IMR-90 (cell line): ENCODE measurements at regions of chr20 and their contacts with region 1.

Region 1: GRCh38 chr20:37534401-37535157 is 6.9 kb upstream of the BLCAP start:
- DNase-seq: peak; percentile 77
- ATAC-seq: peak; percentile 98
- H3K4me3 ChIP-seq: no peak overlapping the region
- H3K27ac ChIP-seq: no peak overlapping the region
- H3K4me1 ChIP-seq: no peaks in the 10 kb centered on the region
- H3K27me3 ChIP-seq: peaks cover 14% of the 10 kb centered on the region
- CTCF ChIP-seq: peak; percentile 93
- POLR2A ChIP-seq: peak; percentile 49; the same call in 1 of the 2 replicates
- RAD21 ChIP-seq: peak; percentile 99

Region 2: DNA sequence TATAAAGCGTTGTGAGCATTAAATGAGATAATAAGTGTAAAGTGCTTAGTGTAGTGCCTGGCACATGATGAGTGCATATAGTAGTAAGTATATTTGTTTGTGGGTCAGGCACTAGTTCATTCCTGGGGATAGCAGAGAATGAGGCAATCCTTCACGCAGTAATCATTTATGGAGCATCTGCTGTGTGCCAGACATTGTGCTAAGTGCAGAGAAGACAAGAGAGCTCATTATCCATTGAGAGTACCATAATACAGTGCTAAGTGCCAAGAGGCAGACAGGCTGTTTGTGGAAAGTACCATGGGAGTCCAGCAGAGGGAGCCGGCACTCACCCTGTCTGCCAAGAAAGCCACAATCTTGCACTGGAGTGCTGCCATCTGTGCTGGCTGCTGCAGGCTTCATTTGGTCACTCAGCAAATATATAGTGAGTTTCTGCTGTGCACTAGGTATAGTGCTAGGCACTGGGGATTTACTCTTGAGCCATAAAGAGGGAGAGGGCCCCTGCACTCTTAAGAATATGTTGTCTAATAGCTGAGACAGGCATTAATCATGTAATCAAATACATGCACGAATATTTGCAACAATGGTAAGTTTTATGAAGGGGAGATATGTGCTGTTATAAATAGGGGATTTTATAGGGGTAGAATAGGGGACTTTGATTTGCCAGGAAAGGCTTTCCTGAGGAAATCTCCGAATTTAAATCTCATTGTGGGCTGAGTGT is 342.3 kb before region 1 on chr20:
- CTCF ChIA-PET with region 1: interaction called, 3 read pairs
- POLR2A ChIA-PET with region 1: no interaction called
- dilution Hi-C with region 1: no loop called
- in situ Hi-C with region 1: loop called (anchors 5 kb)
- intact Hi-C with region 1: loop called (anchors 1 kb)
- DNase-seq: peak; percentile 89
- ATAC-seq: peak; percentile 88
- H3K4me3 ChIP-seq: no peak overlapping the region
- H3K27ac ChIP-seq: no peak overlapping the region
- H3K4me1 ChIP-seq: no peaks in the 10 kb centered on the region
- H3K27me3 ChIP-seq: no peaks in the 10 kb centered on the region
- CTCF ChIP-seq: peak; percentile 87
- POLR2A ChIP-seq: no peak
- RAD21 ChIP-seq: peak; percentile 56

Region 3: DNA sequence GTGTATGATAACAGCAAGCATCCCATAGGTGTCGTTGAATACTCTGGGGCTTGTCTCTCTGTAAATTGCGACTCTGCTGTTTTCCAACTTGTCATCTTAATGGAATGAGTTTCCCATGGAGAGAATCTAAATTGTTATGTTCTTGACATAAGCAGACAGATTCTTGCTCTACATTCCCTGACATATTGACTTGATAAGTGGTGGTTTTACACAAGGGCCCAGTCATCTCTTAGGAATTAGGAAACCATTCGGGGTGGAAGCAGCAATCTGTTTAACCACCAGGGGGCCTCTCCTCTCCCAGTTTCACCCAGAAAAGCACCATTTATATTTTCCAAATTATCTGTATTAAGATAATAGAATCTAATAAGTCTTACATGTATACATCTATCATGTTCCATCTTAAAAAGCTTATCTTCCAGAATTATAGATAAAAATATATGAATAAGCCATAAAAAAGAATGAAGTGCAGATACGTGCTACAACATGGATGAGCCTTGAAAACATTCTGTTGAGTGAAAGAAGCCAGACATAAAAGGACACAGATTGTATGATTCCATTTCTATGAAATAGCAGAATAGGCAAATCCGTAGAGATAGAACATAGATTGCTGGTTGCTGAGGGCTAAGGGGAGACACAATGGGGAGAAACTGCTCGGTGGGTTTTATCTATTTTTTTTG is 332.2 kb before region 1 on chr20:
- CTCF ChIA-PET with region 1: no interaction called
- POLR2A ChIA-PET with region 1: no interaction called
- dilution Hi-C with region 1: no loop called
- in situ Hi-C with region 1: loop called (anchors 5 kb)
- intact Hi-C with region 1: loop called (anchors 1 kb)
- DNase-seq: peak; percentile 98
- ATAC-seq: peak; percentile 96
- H3K4me3 ChIP-seq: no peak overlapping the region; the same call in 1 of the 2 replicates
- H3K27ac ChIP-seq: peak overlapping the region; percentile 5; the same call in 1 of the 2 replicates
- H3K4me1 ChIP-seq: peaks cover 3% of the 10 kb centered on the region
- H3K27me3 ChIP-seq: no peaks in the 10 kb centered on the region
- CTCF ChIP-seq: peak; percentile 97
- POLR2A ChIP-seq: no peak
- RAD21 ChIP-seq: peak; percentile 47

Region 4: GRCh38 chr20:37270576-37271420 is 263.8 kb before region 1 on chr20:
- CTCF ChIA-PET with region 1: interaction called, 3 read pairs
- POLR2A ChIA-PET with region 1: interaction called, 7 read pairs
- dilution Hi-C with region 1: no loop called
- in situ Hi-C with region 1: loop called (anchors 5 kb)
- intact Hi-C with region 1: loop called (anchors 1 kb)
- DNase-seq: peak; percentile 50
- ATAC-seq: no peak
- H3K4me3 ChIP-seq: no peak overlapping the region
- H3K27ac ChIP-seq: no peak overlapping the region
- H3K4me1 ChIP-seq: no peaks in the 10 kb centered on the region; the same call in 1 of the 2 replicates
- H3K27me3 ChIP-seq: peaks cover 7% of the 10 kb centered on the region
- CTCF ChIP-seq: no peak
- POLR2A ChIP-seq: no peak
- RAD21 ChIP-seq: no peak